Dorsolateral prefrontal cortex (tissue), 120 donors: ENCODE measurements at regions of chr9 and their contacts with region 1.

Region 1: DNA sequence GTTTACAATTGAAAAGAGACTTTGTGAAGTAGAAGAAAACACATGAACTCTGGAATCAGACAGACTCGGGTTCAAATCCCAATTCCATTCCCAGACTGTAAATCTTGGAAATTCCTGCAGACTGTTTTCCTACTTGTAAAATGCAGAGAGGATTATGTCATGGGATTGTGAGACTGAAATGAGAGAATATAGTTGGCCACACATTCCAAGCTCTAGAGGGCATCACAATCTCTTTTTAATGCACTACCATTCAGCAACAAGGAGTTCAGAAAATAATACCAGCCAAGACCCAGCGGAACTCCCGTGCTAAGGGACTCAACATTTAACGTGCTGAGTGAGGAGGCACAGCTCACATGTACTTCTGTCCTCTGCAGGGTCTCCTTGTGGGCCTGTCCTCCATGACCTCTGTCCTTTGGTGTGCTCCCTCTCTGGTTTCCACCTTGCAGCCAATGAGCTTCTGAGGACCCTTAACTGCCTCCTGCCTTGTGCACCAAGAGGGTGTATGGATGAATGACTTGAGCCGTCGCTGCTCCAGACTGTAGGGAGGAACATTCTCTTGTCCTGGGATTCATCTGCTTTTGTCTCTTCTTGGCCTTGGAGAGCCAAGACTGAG is 263.5 kb downstream of the NTRK2 start:
- DNase-seq: no peak
- H3K4me3 ChIP-seq: no peak overlapping the region
- H3K27ac ChIP-seq: peak overlapping the region in 33 of 59 donors; percentile 5 to 72 (median 38)
- H3K27me3 ChIP-seq: no peaks in the 10 kb centered on the region
- CTCF ChIP-seq: peak in 52 of 56 donors; percentile 9 to 67 (median 39)

Region 2: DNA sequence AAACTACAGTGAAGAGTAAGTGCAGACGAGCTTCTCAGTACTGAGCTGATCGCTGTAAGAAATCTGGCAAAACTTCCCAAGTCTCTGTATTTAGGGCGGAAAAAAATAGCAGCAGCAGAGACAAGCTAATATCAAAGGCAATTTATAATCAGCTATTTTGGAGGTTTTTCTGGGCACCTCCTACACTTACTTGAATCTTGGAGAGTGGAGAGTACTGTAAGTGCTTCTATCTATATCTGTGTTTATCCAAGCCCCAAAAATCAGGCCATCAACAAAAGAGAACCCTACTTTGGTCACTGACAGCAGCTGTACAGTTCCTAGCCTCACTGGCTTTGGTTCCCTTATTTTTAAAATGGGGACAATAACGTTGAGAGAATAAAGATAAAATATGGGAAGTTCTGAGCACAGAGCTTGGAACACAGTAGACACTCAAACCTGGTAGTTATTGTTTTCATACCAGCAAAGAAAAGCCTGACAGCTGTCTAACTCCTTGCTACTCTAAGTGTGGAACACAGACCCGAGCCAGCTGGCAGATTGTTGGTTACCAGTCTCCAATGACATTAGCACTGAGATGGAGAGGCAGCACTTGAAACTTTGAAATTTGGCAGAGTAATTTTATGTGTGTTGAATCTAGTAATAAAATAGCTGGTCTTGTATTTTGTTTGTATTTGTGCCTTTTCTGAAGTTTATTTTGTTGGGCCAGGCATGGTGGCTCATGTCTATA is 496.5 kb before region 1 on chr9:
- intact Hi-C with region 1: no loop called
- DNase-seq: peak in 6 of 10 donors; percentile 34 to 72 (median 56)
- H3K4me3 ChIP-seq: no peak overlapping the region
- H3K27ac ChIP-seq: peak overlapping the region in 19 of 59 donors; percentile 9 to 67 (median 43)
- H3K27me3 ChIP-seq: no peaks in the 10 kb centered on the region
- CTCF ChIP-seq: no peak

Region 3: DNA sequence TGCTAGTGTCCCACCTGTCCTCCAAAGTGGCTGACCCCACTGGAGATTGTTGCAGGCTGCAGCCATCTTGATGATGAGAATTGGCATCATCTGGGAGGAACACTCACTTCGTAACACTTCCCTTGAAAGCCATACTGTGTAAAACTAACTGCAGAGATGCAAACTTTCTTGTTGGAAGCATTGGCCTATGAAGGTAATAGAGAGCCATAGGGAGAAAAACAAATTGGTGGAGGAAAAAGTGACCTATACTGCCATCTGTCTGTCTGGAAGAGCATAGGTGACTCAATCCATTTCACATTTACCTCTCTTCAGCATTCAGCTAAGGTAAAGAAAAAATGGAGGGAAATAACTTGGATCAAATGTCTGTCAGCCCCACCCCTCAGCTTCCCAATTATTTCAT is 209.9 kb after region 1 on chr9:
- intact Hi-C with region 1: loop called in 1 of 2 experiments (anchors 5 kb)
- DNase-seq: no peak
- H3K4me3 ChIP-seq: no peak overlapping the region
- H3K27ac ChIP-seq: peak overlapping the region in 8 of 59 donors; percentile 2 to 55 (median 31)
- H3K27me3 ChIP-seq: no peaks in the 10 kb centered on the region
- CTCF ChIP-seq: peak; percentile 31 to 79 (median 63)